HepG2 (cell line): ENCODE measurements at regions of chr19 and their contacts with region 1.

Region 1: GRCh38 chr19:48965040-48965805 is at the start of gene FTL:
- DNase-seq: peak; percentile 95
- ATAC-seq: peak; percentile 17
- H3K4me3 ChIP-seq: peak within 1 kb of the TSS; percentile 80 to 99 (median 89)
- H3K27ac ChIP-seq: peak within 1 kb of the TSS; percentile 100
- H3K4me1 ChIP-seq: peaks cover 49% of the 10 kb centered on the region
- H3K27me3 ChIP-seq: no peaks in the 10 kb centered on the region; a peak in 1 of 5 replicates
- CTCF ChIP-seq: no peak
- EP300 ChIP-seq: peak in 1 of 2 experiments; percentile 51; a peak in 1 of 4 replicates
- POLR2A ChIP-seq: peak; percentile 99 to 100
- RAD21 ChIP-seq: peak; percentile 69
- total RNA-seq, gene FTL: 3,909 and 8,800 TPM in 2 replicates

Region 2: GRCh38 chr19:48646001-48646721 is 319.1 kb before region 1 on chr19 and contains the start of gene CA11:
- CTCF ChIA-PET with region 1: no interaction called
- POLR2A ChIA-PET with region 1: no interaction called
- in situ Hi-C with region 1: no loop called
- intact Hi-C with region 1: no loop called
- DNase-seq: peak; percentile 70
- ATAC-seq: peak; percentile 92
- H3K4me3 ChIP-seq: peak within 1 kb of the TSS; percentile 52 to 69 (median 59)
- H3K27ac ChIP-seq: no peak within 1 kb of the TSS
- H3K4me1 ChIP-seq: peaks cover 18% of the 10 kb centered on the region
- H3K27me3 ChIP-seq: peaks cover 0 to 1% of the 10 kb centered on the region in 2 experiments; a peak in 2 of 5 replicates
- CTCF ChIP-seq: peak; percentile 98
- EP300 ChIP-seq: no peak
- POLR2A ChIP-seq: no peak
- RAD21 ChIP-seq: peak; percentile 88
- total RNA-seq, gene CA11: 0.24 and 0.58 TPM in 2 replicates

Region 3: DNA sequence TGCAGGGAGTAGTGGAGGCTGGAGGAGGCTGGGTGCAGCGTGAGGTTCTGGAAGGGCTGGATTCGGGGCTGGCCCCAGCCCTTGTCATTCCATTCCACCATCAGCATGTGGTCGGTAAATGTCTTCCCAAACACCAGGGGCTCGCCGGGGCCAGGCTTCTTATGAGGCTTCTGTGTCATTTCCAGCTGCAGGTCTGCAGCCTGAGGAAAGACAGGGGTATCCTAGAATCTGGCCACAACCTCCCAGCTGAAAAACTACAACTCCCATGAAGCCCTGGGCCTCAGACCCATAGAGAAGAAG is 158.8 kb before region 1 on chr19:
- CTCF ChIA-PET with region 1: no interaction called
- POLR2A ChIA-PET with region 1: interaction called, 16 read pairs
- in situ Hi-C with region 1: no loop called
- intact Hi-C with region 1: no loop called
- DNase-seq: no peak
- ATAC-seq: no peak
- H3K4me3 ChIP-seq: peak overlapping the region in 2 of 3 experiments; percentile 73 to 78; a peak in 3 of 6 replicates
- H3K27ac ChIP-seq: peak overlapping the region; percentile 82
- H3K4me1 ChIP-seq: peaks cover 38% of the 10 kb centered on the region
- H3K27me3 ChIP-seq: no peaks in the 10 kb centered on the region
- CTCF ChIP-seq: 0 out of 2 replicates have a peak, but pooled peaks have one; percentile 2
- EP300 ChIP-seq: no peak
- POLR2A ChIP-seq: no peak
- RAD21 ChIP-seq: no peak

Region 4: GRCh38 chr19:48899781-48900476 is 65.3 kb before region 1 on chr19 and contains the start of gene NUCB1:
- CTCF ChIA-PET with region 1: no interaction called
- POLR2A ChIA-PET with region 1: interaction called, 26 read pairs
- in situ Hi-C with region 1: no loop called
- intact Hi-C with region 1: loop called (anchors 2 kb)
- DNase-seq: peak; percentile 97
- ATAC-seq: peak; percentile 91
- H3K4me3 ChIP-seq: peak within 1 kb of the TSS; percentile 73 to 97 (median 96)
- H3K27ac ChIP-seq: peak within 1 kb of the TSS; percentile 77
- H3K4me1 ChIP-seq: peaks cover 44% of the 10 kb centered on the region
- H3K27me3 ChIP-seq: no peaks in the 10 kb centered on the region; a peak in 1 of 5 replicates
- CTCF ChIP-seq: peak; percentile 41
- EP300 ChIP-seq: no peak
- POLR2A ChIP-seq: peak; percentile 23 to 77; a peak in 2 of 4 replicates
- RAD21 ChIP-seq: no peak
- total RNA-seq, gene NUCB1: 34.3 and 82.3 TPM in 2 replicates

Region 5: GRCh38 chr19:48946463-48947257 is 18.6 kb before region 1 on chr19:
- CTCF ChIA-PET with region 1: no interaction called
- POLR2A ChIA-PET with region 1: interaction called, 153 read pairs
- in situ Hi-C with region 1: no loop called
- intact Hi-C with region 1: loop called (anchors 1 kb)
- DNase-seq: no peak
- ATAC-seq: peak; percentile 58
- H3K4me3 ChIP-seq: peak overlapping the region in 1 of 3 experiments; percentile 24; a peak in 1 of 6 replicates
- H3K27ac ChIP-seq: no peak overlapping the region
- H3K4me1 ChIP-seq: peaks cover 63% of the 10 kb centered on the region
- H3K27me3 ChIP-seq: no peaks in the 10 kb centered on the region
- CTCF ChIP-seq: no peak
- EP300 ChIP-seq: no peak
- POLR2A ChIP-seq: no peak
- RAD21 ChIP-seq: no peak

Region 6: DNA sequence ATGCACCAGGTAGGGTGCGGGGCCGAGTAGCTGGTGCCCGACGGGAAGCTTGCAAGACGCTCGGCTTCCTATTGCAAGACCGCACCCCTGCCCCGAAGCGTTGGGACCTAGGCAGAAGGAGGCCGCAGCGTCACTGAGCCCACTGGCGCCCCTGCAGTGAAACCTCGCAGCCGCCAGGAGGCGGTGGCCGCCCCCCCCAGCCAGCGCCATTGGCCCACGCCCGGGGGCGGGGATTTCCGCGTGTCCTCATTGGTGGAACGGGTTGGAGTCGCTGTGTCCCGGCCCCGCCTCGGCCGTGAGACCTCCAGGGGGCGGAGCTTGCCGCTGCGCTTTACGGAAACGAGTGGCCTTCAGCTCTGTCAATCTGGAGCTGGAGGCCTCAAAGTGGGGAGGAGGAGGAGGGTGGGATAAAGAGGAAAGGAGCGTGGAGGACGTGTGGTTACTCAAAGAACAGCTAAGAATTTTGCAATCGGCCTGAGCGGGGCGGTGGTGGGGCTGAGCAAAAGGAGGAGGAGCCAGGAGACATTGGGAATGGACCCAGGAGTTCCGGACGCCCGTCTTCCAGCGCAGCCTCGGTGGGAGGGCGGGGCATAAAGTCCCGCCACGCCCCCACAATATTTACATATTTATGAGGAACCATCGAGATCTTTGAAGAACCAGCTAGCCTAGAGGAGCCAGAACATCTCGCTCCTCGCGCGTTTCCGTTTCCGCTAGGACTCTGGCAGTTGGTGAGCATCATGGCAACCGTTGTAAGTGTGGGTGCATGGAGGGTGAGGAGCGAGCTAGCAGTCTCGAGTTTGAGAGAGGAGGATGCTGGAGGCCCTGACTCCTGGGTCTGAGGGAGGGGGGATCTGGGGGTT is 28.2 kb after region 1 on chr19 and contains the starts of genes GYS1 and RUVBL2:
- CTCF ChIA-PET with region 1: no interaction called
- POLR2A ChIA-PET with region 1: interaction called, 57 read pairs
- in situ Hi-C with region 1: no loop called
- intact Hi-C with region 1: no loop called
- DNase-seq: peak; percentile 99
- ATAC-seq: peak; percentile 90
- H3K4me3 ChIP-seq: peak within 1 kb of the TSS; percentile 90 to 98 (median 98)
- H3K27ac ChIP-seq: peak within 1 kb of the TSS; percentile 80
- H3K4me1 ChIP-seq: peaks cover 41% of the 10 kb centered on the region
- H3K27me3 ChIP-seq: no peaks in the 10 kb centered on the region; a peak in 1 of 5 replicates
- CTCF ChIP-seq: peak; percentile 93
- EP300 ChIP-seq: no peak
- POLR2A ChIP-seq: peak; percentile 91 to 98
- RAD21 ChIP-seq: peak; percentile 50; the same call in 1 of the 2 replicates
- total RNA-seq, gene GYS1: 16.4 and 18.4 TPM in 2 replicates
- total RNA-seq, gene RUVBL2: 108 and 122 TPM in 2 replicates

Region 7: GRCh38 chr19:49042177-49042576 is 77.0 kb after region 1 on chr19:
- CTCF ChIA-PET with region 1: no interaction called
- POLR2A ChIA-PET with region 1: no interaction called
- in situ Hi-C with region 1: no loop called
- intact Hi-C with region 1: no loop called
- DNase-seq: no peak
- ATAC-seq: no peak
- H3K4me3 ChIP-seq: no peak overlapping the region
- H3K27ac ChIP-seq: no peak overlapping the region
- H3K4me1 ChIP-seq: no peaks in the 10 kb centered on the region
- H3K27me3 ChIP-seq: peaks cover 1 to 5% of the 10 kb centered on the region in 2 experiments; a peak in 2 of 5 replicates
- CTCF ChIP-seq: no peak
- EP300 ChIP-seq: no peak
- POLR2A ChIP-seq: no peak
- RAD21 ChIP-seq: no peak